ENCODE measurements at regions of chr2 and their contacts with region 1.

Region 1: GRCh38 chr2:111897924-111898702 is at the start of gene MERTK:
- DNase-seq: peak; percentile 87 to 90
- H3K4me3 ChIP-seq: peak within 1 kb of the TSS; percentile 67 to 81
- H3K27ac ChIP-seq: peak within 1 kb of the TSS; percentile 87 to 96
- H3K4me1 ChIP-seq: peaks cover 4 to 5% of the 10 kb centered on the region in 2 donors
- H3K27me3 ChIP-seq: no peaks in the 10 kb centered on the region
- CTCF ChIP-seq: peak; percentile 75 to 76 (median 76)
- POLR2A ChIP-seq: peak; percentile 53 to 73
- total RNA-seq, gene MERTK: 10.6 to 36.6 (median 24.6) TPM

Region 2: GRCh38 chr2:112048887-112049286 is 150.8 kb after region 1 on chr2:
- intact Hi-C with region 1: loop called (anchors 5 kb)
- DNase-seq: peak in 1 of 2 donors; percentile 26
- H3K4me3 ChIP-seq: no peak overlapping the region
- H3K27ac ChIP-seq: no peak overlapping the region
- H3K4me1 ChIP-seq: peaks cover 0 to 3% of the 10 kb centered on the region in 2 donors
- H3K27me3 ChIP-seq: no peaks in the 10 kb centered on the region
- CTCF ChIP-seq: peak; percentile 77 to 82 (median 79)
- POLR2A ChIP-seq: no peak

Region 3: GRCh38 chr2:112229348-112229747 is 331.2 kb after region 1 on chr2:
- intact Hi-C with region 1: no loop called
- DNase-seq: no peak
- H3K4me3 ChIP-seq: no peak overlapping the region
- H3K27ac ChIP-seq: no peak overlapping the region
- H3K4me1 ChIP-seq: no peaks in the 10 kb centered on the region
- H3K27me3 ChIP-seq: no peaks in the 10 kb centered on the region
- CTCF ChIP-seq: no peak
- POLR2A ChIP-seq: no peak

Measured in uterus (tissue), 4 donors.